Mucosa of descending colon (tissue), 3 donors: ENCODE measurements at regions of chr19 and their contacts with region 1.

Region 1: GRCh38 chr19:19115954-19116353 is 22.3 kb downstream of the TMEM161A start:
- DNase-seq: peak in 2 of 3 donors; percentile 62 to 67
- ATAC-seq: peak; percentile 65
- H3K4me3 ChIP-seq: no peak overlapping the region
- H3K4me1 ChIP-seq: no peaks in the 10 kb centered on the region
- CTCF ChIP-seq: peak; percentile 29

Region 2: DNA sequence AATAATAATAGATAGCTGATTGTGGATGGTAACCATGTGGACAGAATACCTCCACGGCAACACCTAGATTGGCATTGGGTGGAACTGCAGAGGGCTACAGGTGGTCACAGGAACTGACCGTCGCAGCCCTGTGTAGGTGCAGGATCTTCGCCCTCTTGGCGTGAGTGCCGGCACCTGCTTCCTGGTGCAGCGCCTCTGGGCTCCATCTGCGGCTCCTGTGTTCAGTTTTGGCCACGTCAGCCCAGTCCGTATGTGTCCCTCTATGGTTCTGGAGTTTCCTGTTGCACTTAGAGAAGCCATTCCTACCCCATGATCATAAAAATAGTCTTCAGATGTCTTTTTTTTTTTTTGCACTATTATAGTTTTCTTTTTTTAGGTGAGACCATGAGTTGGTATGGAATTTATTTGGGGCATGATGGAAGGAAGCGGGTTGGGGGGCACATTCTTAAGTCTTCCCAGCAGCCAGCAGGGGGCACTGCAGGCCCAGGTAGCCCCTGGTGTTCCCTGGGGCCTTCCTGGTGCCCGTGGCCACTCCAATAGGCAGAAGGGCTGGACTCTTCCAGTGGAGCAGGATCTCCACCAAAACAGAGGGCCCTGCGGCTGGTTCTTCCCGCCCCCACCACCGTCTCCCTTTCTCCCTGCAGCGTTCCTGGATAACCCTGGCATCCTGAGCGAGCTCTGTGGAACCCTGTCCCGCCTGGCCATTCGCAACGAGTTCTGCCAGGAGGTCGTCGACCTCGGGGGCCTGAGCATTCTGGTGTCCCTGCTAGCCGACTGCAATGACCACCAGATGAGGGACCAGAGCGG is 62.2 kb before region 1 on chr19:
- intact Hi-C with region 1: loop called in 1 of 2 experiments (anchors 10 kb)
- DNase-seq: peak in 2 of 3 donors; percentile 56 to 73
- ATAC-seq: peak; percentile 78
- H3K4me3 ChIP-seq: no peak overlapping the region
- H3K4me1 ChIP-seq: no peaks in the 10 kb centered on the region
- CTCF ChIP-seq: peak; percentile 31

Region 3: DNA sequence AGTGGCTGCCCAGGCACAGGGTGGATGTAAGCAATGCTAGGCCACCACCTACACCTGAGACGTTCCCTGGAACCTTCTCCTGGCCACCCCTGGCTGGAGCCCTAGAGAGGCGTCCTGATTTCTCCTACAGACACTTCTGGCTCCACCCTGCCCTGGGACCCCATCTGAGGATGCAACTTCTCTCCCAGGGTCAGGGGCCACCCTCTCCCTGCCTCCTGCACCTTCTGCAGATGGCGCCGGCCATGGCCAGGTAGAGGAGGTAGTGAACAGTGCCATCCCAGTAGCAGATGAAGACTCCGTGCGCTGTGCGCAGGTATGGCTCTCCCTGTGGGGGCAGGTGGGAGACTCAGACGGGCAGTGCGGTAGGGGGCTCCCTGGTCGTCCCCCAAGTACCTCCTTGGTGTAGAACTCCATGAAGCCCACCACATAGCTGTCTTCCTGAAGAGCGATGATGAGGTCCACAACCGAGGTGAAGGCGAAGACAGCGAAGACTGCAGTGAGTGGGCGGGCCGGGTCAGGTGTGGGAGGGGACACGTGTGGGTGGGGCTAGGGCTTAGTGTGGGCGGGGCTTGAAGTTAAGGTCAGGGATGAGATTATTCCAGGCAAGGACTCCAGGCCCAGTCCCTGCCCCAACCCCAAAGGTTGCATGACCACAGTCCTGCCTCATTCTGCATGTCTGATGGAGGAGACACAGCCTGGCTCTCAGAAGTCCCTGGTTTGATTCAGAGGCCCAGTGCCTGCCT is 154.2 kb after region 1 on chr19:
- intact Hi-C with region 1: no loop called
- DNase-seq: no peak
- ATAC-seq: no peak
- H3K4me3 ChIP-seq: no peak overlapping the region
- H3K4me1 ChIP-seq: no peaks in the 10 kb centered on the region
- CTCF ChIP-seq: no peak